Prostate gland (tissue), 2 donors: ENCODE measurements at regions of chr11 and their contacts with region 1.

Region 1: GRCh38 chr11:11787305-11788062 is 54.3 kb upstream of the USP47 start:
- DNase-seq: peak; percentile 73
- H3K4me3 ChIP-seq: no peak overlapping the region
- H3K27ac ChIP-seq: no peak overlapping the region
- H3K4me1 ChIP-seq: no peaks in the 10 kb centered on the region
- H3K27me3 ChIP-seq: no peaks in the 10 kb centered on the region
- CTCF ChIP-seq: peak; percentile 64 to 95 (median 91)
- POLR2A ChIP-seq: no peak

Region 2: DNA sequence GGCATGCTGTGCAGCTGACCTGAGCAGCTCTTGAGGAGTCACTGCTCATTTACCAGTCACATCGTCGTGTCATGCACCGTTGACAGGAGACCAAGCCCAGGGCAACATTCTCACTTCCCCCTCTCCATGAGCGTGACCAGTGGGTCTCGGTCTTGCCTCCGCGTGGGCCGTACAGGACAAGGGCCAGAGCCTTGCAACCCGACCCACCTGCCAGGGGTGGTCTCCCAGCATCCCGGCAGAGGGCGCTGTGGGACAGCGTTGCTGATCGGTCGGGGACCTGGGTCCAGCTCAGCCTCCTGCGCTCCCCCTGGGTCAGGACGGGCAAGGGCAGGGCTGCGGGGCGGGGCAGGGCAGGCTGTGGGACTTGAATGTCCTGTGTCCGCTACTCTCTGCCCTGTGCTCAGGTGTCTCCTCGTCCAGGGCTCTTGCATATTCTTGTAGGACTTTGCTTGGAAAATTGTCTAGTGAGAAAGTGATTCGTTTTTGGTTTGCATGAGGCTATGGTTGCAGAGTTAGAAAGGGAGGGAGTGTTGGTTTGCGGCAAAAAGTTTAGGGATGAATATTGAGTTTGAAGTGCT is 995.0 kb before region 1 on chr11:
- intact Hi-C with region 1: loop called (anchors 10 kb)
- DNase-seq: peak; percentile 77
- H3K4me3 ChIP-seq: no peak overlapping the region
- H3K27ac ChIP-seq: no peak overlapping the region
- H3K4me1 ChIP-seq: no peaks in the 10 kb centered on the region
- H3K27me3 ChIP-seq: no peaks in the 10 kb centered on the region
- CTCF ChIP-seq: peak; percentile 69 to 95 (median 86)
- POLR2A ChIP-seq: no peak

Region 3: GRCh38 chr11:10933455-10934292 is 853.8 kb before region 1 on chr11:
- intact Hi-C with region 1: loop called (anchors 5 kb)
- DNase-seq: peak; percentile 91
- H3K4me3 ChIP-seq: peak overlapping the region; percentile 19 to 34
- H3K27ac ChIP-seq: peak overlapping the region; percentile 81 to 84
- H3K4me1 ChIP-seq: no peaks in the 10 kb centered on the region
- H3K27me3 ChIP-seq: no peaks in the 10 kb centered on the region
- CTCF ChIP-seq: peak; percentile 88 to 98 (median 96)
- POLR2A ChIP-seq: peak; percentile 32

Region 4: DNA sequence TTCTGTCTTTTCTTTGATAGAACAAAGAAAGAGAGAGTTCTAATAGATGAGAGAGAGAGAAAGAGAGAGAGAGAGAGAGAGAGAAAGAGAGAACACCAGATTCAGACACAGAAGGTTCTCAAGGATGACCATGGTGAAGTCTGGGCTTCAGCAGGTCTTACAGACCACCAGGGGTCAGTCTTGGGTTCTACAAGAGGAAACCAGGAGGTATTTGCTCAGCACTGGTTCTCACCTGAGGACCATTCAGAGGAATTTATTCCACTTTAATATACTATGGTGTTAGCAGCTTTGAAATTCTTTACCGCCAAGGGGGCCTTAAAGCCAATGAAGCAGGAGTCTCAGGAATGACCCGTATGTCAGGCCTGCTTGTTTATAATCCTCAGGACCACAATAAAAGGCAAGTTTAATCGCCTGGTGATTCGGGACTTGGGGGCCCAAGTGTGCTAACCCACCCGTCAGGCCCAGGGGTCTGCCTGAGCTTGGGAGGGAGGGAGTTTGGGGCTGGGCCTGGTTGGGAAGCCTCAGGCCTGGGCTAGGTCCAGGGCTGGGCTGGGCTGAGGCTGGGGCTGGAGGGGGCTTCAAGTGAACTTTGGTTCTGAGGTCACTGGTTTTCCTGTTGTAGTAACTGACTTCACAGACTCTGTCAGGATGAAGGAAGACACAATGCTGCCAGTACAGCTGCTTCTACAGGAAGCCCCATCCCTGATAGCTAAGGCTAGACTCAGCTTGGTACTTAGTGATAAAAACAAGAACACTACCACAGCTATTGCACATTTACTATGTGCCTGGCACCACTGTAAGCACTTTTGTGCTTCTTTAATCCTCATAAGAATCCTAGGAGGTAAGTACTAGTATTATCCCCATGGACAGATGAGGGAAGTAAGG is 750.4 kb before region 1 on chr11:
- intact Hi-C with region 1: loop called (anchors 2 kb)
- DNase-seq: peak; percentile 77
- H3K4me3 ChIP-seq: no peak overlapping the region
- H3K27ac ChIP-seq: peak overlapping the region in 1 of 2 donors; percentile 21
- H3K4me1 ChIP-seq: peaks cover 3% of the 10 kb centered on the region
- H3K27me3 ChIP-seq: no peaks in the 10 kb centered on the region
- CTCF ChIP-seq: peak; percentile 45 to 88 (median 73)
- POLR2A ChIP-seq: no peak

Region 5: DNA sequence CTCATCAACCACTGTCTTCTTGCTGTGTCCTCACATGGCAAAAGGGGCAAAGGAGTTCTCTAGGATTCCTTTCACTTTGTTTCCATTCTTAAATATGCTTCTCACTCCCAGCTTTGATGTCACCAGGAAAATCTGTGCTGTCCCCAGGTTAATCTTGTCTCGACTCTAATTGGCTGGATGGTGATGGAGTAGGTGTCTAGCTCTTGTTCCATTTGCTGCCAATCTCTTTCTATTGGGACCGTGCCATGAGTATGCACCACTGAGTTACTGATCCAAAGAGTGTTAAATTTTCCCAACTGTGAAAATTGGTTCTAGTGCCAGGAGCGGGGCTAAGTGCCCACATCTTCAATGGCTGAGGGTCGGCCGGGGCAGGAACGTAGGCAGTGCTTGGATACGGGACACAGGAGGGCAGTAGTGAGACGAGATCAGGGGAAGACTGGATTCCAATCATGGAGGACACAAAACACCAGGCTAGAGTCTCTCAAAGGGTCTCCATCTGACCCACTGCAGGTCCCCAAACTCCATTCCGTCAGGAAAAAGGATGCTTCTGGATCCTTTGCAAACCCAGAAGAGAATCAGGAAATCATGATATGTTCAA is 386.8 kb before region 1 on chr11:
- intact Hi-C with region 1: loop called (anchors 10 kb)
- DNase-seq: no peak
- H3K4me3 ChIP-seq: no peak overlapping the region
- H3K27ac ChIP-seq: no peak overlapping the region
- H3K4me1 ChIP-seq: no peaks in the 10 kb centered on the region
- H3K27me3 ChIP-seq: no peaks in the 10 kb centered on the region
- CTCF ChIP-seq: no peak
- POLR2A ChIP-seq: no peak

Region 6: DNA sequence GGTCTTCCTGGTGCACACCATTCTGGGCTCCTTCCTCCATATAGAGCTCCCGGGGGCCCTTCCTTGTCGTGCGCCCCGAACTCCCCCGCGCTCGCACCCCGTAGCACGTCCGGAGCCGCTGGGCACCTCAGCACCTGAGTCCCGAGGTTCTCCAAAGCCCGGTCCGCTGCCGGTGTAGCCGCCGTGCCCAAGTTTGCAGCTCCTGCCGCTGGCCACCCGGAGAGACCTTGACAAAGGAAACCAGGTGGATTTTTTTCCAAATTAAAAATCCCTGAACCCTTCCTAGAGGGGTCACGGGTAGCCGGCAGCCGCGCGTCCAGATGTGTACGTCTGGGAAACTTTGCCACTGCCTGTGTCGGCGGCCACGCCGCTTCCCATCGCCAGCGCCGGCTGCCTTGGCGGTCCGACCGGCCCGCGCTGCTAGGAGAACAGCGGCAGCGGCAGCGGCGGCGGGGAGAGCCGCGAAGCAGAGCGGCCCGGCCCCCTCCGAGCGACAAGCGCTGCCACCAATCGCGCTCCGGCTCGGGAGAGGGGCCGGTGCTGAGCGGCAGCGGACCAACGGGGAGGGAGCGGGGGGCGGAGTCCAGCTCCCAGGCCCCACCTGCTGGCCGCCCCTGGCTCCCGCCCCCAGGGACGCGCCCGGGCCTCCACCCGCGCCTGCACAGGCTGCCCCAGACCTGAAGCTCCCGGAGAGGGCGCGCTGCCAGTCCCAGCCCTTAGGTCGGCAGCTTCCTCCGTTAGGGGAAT is 165.7 kb before region 1 on chr11 and contains the start of gene GALNT18:
- intact Hi-C with region 1: loop called (anchors 5 kb)
- DNase-seq: peak; percentile 95
- H3K4me3 ChIP-seq: peak within 1 kb of the TSS; percentile 43 to 49
- H3K27ac ChIP-seq: peak within 1 kb of the TSS; percentile 73 to 78
- H3K4me1 ChIP-seq: peaks cover 8% of the 10 kb centered on the region
- H3K27me3 ChIP-seq: no peaks in the 10 kb centered on the region
- CTCF ChIP-seq: peak; percentile 39 to 77 (median 65)
- POLR2A ChIP-seq: peak; percentile 88
- total RNA-seq, gene GALNT18: 29.4 to 105 TPM

Region 7: GRCh38 chr11:11841723-11842420 is 54.4 kb after region 1 on chr11 and contains the start of gene USP47:
- intact Hi-C with region 1: no loop called
- DNase-seq: peak; percentile 87
- H3K4me3 ChIP-seq: peak within 1 kb of the TSS; percentile 77 to 79
- H3K27ac ChIP-seq: peak within 1 kb of the TSS; percentile 98 to 99
- H3K4me1 ChIP-seq: peaks cover 13% of the 10 kb centered on the region
- H3K27me3 ChIP-seq: no peaks in the 10 kb centered on the region
- CTCF ChIP-seq: peak; percentile 17 to 83 (median 74)
- POLR2A ChIP-seq: peak; percentile 70
- total RNA-seq, gene USP47: 58.4 to 76.6 TPM